Activated CD4-positive, alpha-beta T cell treated with anti-CD3 and anti-CD28 coated beads for 36 hours (primary cell): ENCODE measurements at regions of chr5 and their contacts with region 1.

Region 1: DNA sequence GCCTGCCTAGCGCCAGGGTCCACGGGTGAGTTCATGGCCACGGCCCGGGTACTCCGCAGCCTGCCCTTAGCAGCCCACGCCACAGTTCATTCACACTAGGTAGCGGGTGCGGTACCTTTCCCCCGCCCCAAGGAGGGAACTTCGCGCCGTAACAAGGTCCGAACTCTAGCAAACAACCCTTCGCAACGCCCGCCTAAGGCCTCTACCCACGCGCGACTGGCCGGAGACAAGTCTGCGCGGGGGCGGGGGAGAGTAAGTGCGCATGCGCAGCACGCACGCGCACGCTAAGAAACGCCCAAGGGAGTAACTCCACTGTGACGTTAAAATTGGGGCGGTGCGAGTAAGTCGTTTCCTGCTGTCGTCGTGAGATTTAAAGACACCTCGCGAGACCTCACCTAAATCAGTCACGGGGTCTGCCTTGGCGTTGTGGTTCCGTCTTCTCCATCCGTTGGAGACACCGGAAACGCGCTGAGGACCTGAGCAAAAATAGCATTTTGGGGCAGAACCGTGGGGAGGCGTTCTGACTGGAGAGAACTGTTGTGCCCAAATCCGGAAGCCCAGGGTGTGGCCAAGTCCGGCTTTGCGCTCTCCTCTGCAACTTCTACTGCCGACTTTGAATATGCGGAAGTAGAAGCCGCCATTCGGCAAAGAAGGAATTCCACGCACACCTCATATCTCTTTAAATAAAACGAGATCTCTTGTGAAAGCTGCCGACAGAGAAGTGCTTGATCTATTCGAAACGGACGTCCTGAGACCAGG is at the start of gene RAPGEF6:
- DNase-seq: peak; percentile 98
- ATAC-seq: peak; percentile 89
- H3K4me3 Mint-ChIP-seq: no peak within 1 kb of the TSS
- H3K27ac Mint-ChIP-seq: peak within 1 kb of the TSS; percentile 93
- H3K4me1 Mint-ChIP-seq: peaks cover 22% of the 10 kb centered on the region
- H3K27me3 Mint-ChIP-seq: no peaks in the 10 kb centered on the region
- total RNA-seq, gene RAPGEF6: 26.5 to 30.5 TPM

Region 2: GRCh38 chr5:131270809-131271208 is 364.4 kb before region 1 on chr5:
- CTCF ChIA-PET with region 1: no interaction called
- POLR2A ChIA-PET with region 1: no interaction called
- intact Hi-C with region 1: loop called in 1 of 2 experiments (anchors 5 kb)
- DNase-seq: no peak
- ATAC-seq: no peak
- H3K4me3 Mint-ChIP-seq: peak overlapping the region; percentile 71
- H3K27ac Mint-ChIP-seq: peak overlapping the region; percentile 97
- H3K4me1 Mint-ChIP-seq: peaks cover 72% of the 10 kb centered on the region
- H3K27me3 Mint-ChIP-seq: no peaks in the 10 kb centered on the region

Region 3: GRCh38 chr5:131541762-131542161 is 93.4 kb before region 1 on chr5:
- CTCF ChIA-PET with region 1: interaction called, 3 read pairs
- POLR2A ChIA-PET with region 1: no interaction called
- intact Hi-C with region 1: loop called in 1 of 2 experiments (anchors 5 kb)
- DNase-seq: no peak
- ATAC-seq: peak; percentile 76
- H3K4me3 Mint-ChIP-seq: no peak overlapping the region
- H3K27ac Mint-ChIP-seq: peak overlapping the region; percentile 85
- H3K4me1 Mint-ChIP-seq: peaks cover 84% of the 10 kb centered on the region
- H3K27me3 Mint-ChIP-seq: no peaks in the 10 kb centered on the region

Region 4: DNA sequence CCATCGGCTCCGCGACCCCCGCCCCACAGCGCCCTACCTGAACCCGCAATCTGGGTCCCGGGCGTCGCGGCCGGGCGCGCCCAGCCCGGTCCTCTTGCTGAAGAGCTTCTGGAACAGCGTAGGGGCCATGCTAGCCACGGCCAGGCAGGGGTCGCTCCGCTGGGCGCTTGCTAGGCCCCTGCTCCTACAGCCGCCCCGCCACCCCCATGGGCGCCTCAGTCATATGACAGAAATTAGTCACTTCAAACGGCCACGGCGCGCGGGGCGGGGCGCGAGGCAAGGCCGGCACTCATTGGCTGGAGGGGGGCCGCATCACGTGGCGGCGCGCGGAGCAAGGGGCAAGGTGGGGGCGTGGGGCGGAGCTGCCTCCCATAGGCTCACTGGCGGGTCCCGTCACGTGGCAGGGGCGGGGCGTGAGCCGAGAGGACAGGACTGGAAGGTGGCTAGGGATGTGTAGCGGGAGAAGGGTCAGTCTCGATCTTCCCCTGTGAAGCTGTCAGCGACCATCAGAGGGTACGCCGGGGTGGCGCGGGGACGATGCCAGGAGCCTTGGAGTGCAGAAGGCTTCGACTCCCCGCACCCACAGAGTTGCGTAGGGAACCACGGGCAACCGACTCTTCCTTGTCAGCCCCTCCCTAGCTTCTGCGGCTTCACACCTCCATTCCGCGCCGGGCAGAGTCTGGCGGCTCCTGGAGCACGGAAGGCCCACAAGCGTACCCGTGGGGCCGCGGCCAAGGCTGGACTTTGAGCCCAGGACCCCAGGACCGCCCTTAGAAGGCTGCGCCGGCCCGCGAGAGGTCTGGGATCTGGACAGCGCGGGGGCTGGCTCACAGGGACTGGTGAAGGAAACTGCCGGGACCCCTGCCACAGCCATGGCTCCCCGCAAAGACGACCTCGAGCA is 161.9 kb after region 1 on chr5 and contains the start of gene FNIP1:
- CTCF ChIA-PET with region 1: no interaction called
- POLR2A ChIA-PET with region 1: interaction called, 4 read pairs
- intact Hi-C with region 1: loop called (anchors 1 kb)
- DNase-seq: peak; percentile 99
- ATAC-seq: peak; percentile 98
- H3K4me3 Mint-ChIP-seq: peak within 1 kb of the TSS; percentile 99
- H3K27ac Mint-ChIP-seq: peak within 1 kb of the TSS; percentile 91
- H3K4me1 Mint-ChIP-seq: peaks cover 28% of the 10 kb centered on the region
- H3K27me3 Mint-ChIP-seq: no peaks in the 10 kb centered on the region
- total RNA-seq, gene FNIP1: 14.2 to 16.3 TPM

Region 5: DNA sequence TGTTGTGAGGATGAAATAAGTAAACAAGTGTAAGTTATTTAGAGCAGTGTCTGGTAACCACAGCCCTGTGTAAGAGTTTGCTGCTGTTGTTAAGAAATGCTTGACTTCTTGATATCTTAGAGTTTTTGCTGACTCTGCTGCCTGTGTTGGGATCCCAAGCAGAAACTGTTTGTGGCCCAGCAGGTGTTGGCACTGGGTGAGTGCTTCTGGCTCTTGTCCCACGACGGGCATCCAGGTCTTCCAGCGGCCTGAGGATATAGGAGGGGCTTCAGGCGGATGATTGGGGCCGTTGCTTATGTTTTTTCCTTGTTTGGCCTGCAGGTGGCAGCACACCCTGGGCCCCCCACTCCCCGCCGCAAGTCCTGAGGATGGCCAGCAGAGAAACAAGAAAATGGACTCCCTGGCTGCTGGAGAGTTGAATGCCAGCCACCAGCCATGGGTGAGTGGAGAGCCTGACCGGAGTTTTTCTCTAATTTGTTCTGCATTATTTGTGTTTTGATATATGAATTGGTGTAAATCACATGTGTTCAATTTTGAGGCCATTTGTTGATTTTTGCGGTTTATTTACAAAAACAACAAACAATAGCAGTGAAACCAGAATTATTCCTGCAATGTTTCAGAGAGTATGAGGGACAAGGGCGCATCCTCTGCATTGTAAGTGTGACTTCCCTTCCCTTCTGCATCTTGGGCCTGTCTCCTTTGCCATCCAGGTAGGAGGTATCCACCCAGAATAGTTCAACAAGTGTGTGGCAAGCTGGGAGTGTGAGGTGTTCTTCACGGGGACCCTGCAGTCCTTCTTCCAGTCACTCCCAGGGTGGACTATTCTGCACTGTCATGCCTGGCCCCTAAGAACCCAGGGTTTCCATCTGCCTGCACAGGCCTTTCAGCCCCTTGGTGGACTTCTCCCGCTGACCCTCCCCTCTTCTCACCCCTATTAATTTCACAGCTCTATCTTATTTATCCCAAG is 784.6 kb after region 1 on chr5:
- CTCF ChIA-PET with region 1: no interaction called
- POLR2A ChIA-PET with region 1: no interaction called
- intact Hi-C with region 1: loop called in 1 of 2 experiments (anchors 10 kb)
- DNase-seq: peak; percentile 75
- ATAC-seq: peak; percentile 65
- H3K4me3 Mint-ChIP-seq: peak overlapping the region; percentile 37
- H3K27ac Mint-ChIP-seq: peak overlapping the region; percentile 90
- H3K4me1 Mint-ChIP-seq: peaks cover 83% of the 10 kb centered on the region
- H3K27me3 Mint-ChIP-seq: no peaks in the 10 kb centered on the region

Region 6: GRCh38 chr5:132866342-132867045 is 1231.3 kb after region 1 on chr5 and contains the starts of genes GDF9 and UQCRQ:
- CTCF ChIA-PET with region 1: no interaction called
- POLR2A ChIA-PET with region 1: no interaction called
- intact Hi-C with region 1: loop called in 1 of 2 experiments (anchors 10 kb)
- DNase-seq: peak; percentile 94
- ATAC-seq: peak; percentile 99
- H3K4me3 Mint-ChIP-seq: peak within 1 kb of the TSS; percentile 99
- H3K27ac Mint-ChIP-seq: peak within 1 kb of the TSS; percentile 100
- H3K4me1 Mint-ChIP-seq: peaks cover 26% of the 10 kb centered on the region
- H3K27me3 Mint-ChIP-seq: no peaks in the 10 kb centered on the region
- total RNA-seq, gene GDF9: 0.41 to 0.69 TPM
- total RNA-seq, gene UQCRQ: 299 to 537 TPM